ENCODE measurements at regions of chr15 and their contacts with region 1.

Region 1: DNA sequence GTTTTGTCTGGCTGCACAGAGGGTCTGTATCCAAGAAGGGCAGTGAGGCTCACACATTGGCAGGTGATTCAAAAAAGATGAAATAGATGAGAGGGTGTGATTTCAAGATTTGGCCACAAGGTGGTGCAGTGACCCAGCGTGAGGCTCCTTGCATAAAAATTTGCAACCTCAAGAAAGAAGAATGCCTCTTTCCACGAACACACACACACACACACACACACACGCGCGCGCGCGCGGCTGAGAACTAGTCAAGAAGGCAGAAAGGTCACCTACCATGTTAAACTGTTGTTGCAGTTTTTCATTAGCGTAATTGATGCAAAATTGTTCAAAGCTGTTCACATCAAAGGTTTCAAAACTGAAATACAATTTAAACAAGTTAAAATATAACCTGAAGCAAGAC is 39.2 kb downstream of the MYO5C start:
- DNase-seq: peak; percentile 62 to 67
- H3K4me3 ChIP-seq: no peak overlapping the region
- H3K27ac ChIP-seq: no peak overlapping the region
- H3K4me1 ChIP-seq: no peaks in the 10 kb centered on the region
- H3K27me3 ChIP-seq: no peaks in the 10 kb centered on the region
- CTCF ChIP-seq: peak; percentile 53 to 90 (median 87)
- POLR2A ChIP-seq: no peak

Region 2: DNA sequence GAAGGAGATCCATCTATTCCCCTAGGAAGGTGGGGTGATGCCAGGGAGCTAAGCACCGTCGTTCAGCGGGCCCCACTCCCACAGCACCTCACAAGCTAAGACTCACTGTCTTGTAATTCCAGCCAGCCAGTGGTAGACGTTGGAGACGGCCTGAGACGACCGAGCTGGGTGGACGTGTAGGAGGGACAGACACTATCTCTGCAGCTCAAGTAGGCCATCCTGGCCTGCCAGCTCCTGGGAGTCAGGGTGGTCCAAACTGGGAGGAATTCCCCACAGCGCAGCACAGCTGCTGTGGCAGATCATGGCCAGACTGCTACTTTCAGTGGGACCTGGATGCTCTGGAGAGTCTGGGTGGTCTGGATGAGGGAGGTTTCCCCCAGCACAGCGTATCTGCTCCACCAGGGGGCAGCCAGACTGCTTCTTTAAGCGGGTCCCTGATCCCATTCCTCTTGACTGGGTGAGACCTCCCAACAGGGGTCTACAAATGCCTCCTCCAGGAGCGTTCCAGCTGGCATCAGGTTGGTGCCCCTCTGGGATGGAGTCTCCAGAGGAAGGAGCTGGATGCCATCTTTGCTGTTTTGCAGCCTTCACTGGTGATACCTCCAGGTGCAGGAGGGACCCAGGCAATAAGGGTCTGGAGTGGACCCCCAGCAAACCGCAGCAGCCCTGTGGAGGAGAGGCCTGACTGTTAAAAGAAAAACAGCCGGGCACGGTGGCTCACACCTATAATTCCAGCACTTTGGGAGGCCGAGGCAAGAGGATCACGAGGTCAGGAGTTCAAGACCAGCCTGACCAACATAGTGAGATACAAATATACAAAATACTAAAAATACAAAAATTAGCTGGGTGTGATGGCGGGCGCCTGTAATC is 92.8 kb before region 1 on chr15:
- intact Hi-C with region 1: no loop called
- DNase-seq: no peak
- H3K4me3 ChIP-seq: no peak overlapping the region
- H3K27ac ChIP-seq: no peak overlapping the region
- H3K4me1 ChIP-seq: no peaks in the 10 kb centered on the region
- H3K27me3 ChIP-seq: no peaks in the 10 kb centered on the region
- CTCF ChIP-seq: no peak
- POLR2A ChIP-seq: no peak

Region 3: DNA sequence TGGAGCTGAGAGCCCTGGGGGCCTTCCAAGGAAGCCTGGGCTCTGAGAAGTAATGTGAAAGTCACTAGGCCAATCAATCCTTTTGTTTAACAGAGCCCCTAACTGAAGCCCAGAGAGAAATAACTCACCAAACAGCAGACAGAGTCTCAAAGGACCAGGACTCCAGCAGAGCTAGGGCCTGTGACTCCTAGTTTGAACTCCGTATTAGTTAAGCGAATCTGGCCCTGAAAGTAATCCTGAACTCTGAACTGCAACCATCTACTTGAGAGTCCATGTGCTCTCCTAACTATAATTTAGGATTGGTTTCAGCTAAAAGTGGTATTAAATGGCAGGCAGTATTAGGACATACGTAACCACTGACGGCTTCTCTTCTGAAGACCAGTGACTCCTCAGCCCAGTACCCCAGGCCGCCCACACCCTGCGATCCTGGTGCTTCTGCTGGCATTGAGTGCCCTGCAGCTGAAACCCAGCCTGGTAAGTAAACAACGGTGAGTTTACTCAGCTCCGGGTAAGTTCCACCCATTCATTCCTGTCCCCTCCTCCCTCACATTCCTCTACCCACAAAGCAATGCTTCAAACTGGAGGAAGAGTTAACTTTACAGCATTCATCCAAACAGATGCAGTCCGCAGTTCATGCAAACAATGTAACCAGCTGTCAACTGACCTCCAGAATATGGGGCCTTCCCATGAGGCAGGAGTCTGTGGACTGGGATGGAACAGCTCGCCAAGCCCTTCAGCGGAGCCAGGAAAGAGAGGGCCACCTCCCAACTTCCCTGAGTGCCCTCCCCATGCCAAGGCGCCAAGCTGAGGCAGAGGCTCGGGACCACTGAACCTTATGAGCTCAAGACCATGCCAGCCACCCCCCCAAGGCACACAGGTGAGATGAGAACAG is 31.9 kb after region 1 on chr15:
- intact Hi-C with region 1: loop called (anchors 2 kb)
- DNase-seq: peak; percentile 36 to 81
- H3K4me3 ChIP-seq: peak overlapping the region in 1 of 3 donors; percentile 1
- H3K27ac ChIP-seq: peak overlapping the region; percentile 74 to 76
- H3K4me1 ChIP-seq: no peaks in the 10 kb centered on the region
- H3K27me3 ChIP-seq: no peaks in the 10 kb centered on the region
- CTCF ChIP-seq: no peak
- POLR2A ChIP-seq: no peak

Region 4: GRCh38 chr15:52735231-52736089 is 479.1 kb after region 1 on chr15:
- intact Hi-C with region 1: loop called (anchors 5 kb)
- DNase-seq: peak in 1 of 2 donors; percentile 32
- H3K4me3 ChIP-seq: no peak overlapping the region
- H3K27ac ChIP-seq: no peak overlapping the region
- H3K4me1 ChIP-seq: no peaks in the 10 kb centered on the region
- H3K27me3 ChIP-seq: no peaks in the 10 kb centered on the region
- CTCF ChIP-seq: peak; percentile 84 to 91 (median 88)
- POLR2A ChIP-seq: no peak

Measured in breast epithelium (tissue), 4 donors.